PC-3 (cell line): ENCODE measurements at regions of chr12 and their contacts with region 1.

Region 1: DNA sequence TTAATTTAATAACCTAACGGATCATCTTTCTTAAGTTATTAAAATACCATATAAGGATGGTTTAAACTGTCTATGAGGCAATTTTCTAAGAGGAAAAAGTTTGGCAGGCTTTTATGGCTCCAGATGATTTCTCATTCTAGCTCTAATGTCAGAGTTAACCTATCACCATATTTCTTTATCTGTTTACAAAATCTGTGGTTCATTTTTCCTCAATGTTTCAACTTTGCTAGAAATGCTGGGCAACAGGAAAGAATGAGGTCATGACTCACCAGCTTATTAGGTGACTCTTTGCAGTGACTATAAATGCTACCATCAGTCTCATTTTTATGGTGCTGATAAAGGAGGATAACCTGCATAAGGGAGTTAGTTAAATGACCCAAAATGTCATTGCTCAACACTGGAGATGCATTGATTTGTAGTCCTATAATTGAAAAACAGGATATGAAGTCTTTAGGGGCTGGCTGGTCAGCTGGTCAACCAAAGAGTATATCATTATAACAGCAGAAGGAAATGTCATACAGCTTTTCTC is 45.3 kb upstream of the RAP1B start:
- DNase-seq: peak; percentile 96
- ATAC-seq: peak; percentile 95
- H3K4me3 ChIP-seq: no peak overlapping the region
- H3K27ac ChIP-seq: peak overlapping the region; percentile 66
- H3K4me1 ChIP-seq: peaks cover 27% of the 10 kb centered on the region
- H3K27me3 ChIP-seq: no peaks in the 10 kb centered on the region
- CTCF ChIP-seq: no peak

Region 2: GRCh38 chr12:67430708-67431335 is 1134.6 kb before region 1 on chr12:
- CTCF ChIA-PET with region 1: no interaction called
- POLR2A ChIA-PET with region 1: no interaction called
- intact Hi-C with region 1: no loop called
- DNase-seq: peak; percentile 19
- ATAC-seq: no peak
- H3K4me3 ChIP-seq: no peak overlapping the region
- H3K27ac ChIP-seq: no peak overlapping the region
- H3K4me1 ChIP-seq: peaks cover 37% of the 10 kb centered on the region
- H3K27me3 ChIP-seq: no peaks in the 10 kb centered on the region
- CTCF ChIP-seq: peak; percentile 35

Region 3: DNA sequence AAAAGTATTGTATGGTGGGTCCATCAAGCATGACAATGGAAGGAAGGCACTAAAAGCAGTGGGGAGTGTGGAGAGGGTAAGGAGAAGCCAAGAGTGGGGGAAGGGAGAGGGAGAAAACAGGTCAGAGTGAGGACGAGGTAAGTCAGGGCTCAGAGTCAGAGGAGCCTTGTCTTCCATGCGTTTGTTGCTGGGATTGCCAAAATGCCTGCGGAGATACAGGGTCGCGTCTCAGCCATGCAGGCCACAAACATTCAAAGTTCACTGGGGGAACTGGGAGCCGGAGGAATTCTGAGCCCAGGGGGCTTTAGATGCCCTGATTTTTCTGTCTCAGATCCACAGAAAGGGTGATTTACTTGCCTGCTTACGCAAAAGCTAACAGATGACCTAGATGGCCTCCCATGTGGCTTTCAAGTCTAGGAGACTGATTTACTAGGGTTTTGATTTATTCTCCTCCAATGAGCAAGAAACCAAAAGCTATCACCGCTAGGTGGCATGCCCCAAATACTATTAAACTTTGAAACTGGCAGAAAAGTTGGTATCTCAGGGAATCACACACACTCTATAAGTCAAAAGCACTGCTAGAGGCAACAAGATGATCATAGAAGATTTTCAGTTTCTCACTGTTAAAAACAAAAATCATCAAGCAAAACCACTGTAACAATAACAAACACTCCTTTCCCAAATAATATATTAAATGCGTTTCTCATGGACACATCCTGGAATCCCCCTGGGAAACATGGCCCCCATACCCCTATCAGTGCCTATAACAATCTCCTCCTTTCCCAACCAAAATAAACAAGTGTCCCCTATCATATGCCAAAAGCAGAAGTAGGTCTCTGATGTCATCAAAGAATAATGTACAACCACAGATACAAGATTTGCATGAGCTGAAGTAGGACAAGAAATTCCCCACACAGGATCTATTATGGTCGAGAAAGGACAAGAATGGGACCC is 206.6 kb before region 1 on chr12:
- CTCF ChIA-PET with region 1: no interaction called
- POLR2A ChIA-PET with region 1: no interaction called
- intact Hi-C with region 1: loop called (anchors 5 kb)
- DNase-seq: peak; percentile 84
- ATAC-seq: peak; percentile 86
- H3K4me3 ChIP-seq: no peak overlapping the region
- H3K27ac ChIP-seq: no peak overlapping the region
- H3K4me1 ChIP-seq: peaks cover 4% of the 10 kb centered on the region; the same call in 1 of the 2 replicates
- H3K27me3 ChIP-seq: no peaks in the 10 kb centered on the region
- CTCF ChIP-seq: peak; percentile 86

Region 4: DNA sequence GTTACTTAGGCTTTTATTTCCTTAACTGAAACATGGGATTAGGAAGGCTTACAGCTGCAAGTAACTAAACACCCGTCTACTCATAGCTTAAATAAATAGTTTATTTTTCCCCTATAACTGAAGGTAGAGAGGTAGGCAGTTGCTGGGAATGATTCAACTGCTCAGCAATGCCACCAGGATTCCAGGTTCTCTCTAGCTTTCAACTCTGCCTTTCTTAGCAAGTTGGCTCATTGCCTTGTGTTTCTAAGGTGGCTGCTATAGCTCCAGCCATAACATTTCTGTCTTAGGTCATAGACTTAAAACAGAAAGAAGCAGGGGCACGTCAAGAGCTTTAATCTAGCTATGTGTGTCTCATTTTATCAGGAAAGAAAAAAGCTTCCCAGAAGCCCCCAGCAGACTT is 129.6 kb before region 1 on chr12:
- CTCF ChIA-PET with region 1: no interaction called
- POLR2A ChIA-PET with region 1: no interaction called
- intact Hi-C with region 1: loop called (anchors 5 kb)
- DNase-seq: peak; percentile 97
- ATAC-seq: peak; percentile 85
- H3K4me3 ChIP-seq: peak overlapping the region; percentile 16; the same call in 1 of the 2 replicates
- H3K27ac ChIP-seq: peak overlapping the region; percentile 84
- H3K4me1 ChIP-seq: peaks cover 46% of the 10 kb centered on the region
- H3K27me3 ChIP-seq: no peaks in the 10 kb centered on the region
- CTCF ChIP-seq: no peak

Region 5: DNA sequence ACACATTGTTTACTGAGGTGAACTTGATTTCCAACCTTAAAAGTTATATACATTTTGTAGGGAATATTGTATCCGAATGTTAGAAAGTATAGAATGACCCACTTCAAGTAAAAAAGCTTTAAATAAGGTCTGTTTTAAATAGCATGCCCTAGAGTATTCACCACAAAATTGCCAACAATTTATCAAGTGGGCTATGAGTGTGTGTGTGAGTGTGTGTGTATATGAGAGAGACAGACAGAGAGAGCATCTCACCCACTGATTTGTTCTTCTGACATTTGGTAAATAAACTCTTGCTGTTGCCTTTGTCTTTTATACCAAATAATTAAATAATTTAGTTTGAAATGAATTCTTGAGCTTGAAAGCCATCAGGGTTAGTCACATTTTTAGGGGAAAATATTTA is 15.5 kb after region 1 on chr12:
- CTCF ChIA-PET with region 1: no interaction called
- POLR2A ChIA-PET with region 1: interaction called, 9 read pairs
- intact Hi-C with region 1: loop called (anchors 1 kb)
- DNase-seq: no peak
- ATAC-seq: no peak
- H3K4me3 ChIP-seq: no peak overlapping the region
- H3K27ac ChIP-seq: no peak overlapping the region
- H3K4me1 ChIP-seq: peaks cover 28% of the 10 kb centered on the region
- H3K27me3 ChIP-seq: no peaks in the 10 kb centered on the region
- CTCF ChIP-seq: no peak

Region 6: DNA sequence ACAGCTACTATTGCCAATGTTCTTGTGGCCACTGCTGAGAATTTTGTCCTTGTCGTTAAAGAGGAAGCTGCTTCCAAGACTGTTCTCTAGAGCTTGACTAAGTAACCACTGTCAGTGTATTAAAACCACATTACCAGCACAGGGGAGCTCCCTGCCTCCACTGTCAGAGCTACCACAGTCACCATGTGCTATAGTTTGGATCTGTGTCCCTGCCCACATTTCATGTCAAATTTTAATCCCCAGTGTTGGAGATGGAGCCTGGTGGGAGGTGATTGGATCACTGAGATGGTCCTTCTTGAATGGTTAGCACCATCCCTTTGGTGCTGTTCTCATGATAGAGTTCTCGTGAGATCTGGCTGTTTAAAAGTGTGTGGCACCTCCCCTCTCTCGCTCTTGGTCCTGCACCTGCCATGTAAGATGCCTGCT is 22.0 kb after region 1 on chr12:
- CTCF ChIA-PET with region 1: no interaction called
- POLR2A ChIA-PET with region 1: interaction called, 9 read pairs
- intact Hi-C with region 1: loop called (anchors 2 kb)
- DNase-seq: no peak
- ATAC-seq: no peak
- H3K4me3 ChIP-seq: no peak overlapping the region
- H3K27ac ChIP-seq: no peak overlapping the region
- H3K4me1 ChIP-seq: peaks cover 18% of the 10 kb centered on the region
- H3K27me3 ChIP-seq: no peaks in the 10 kb centered on the region
- CTCF ChIP-seq: no peak

Region 7: GRCh38 chr12:69052613-69053408 is 487.4 kb after region 1 on chr12:
- CTCF ChIA-PET with region 1: no interaction called
- POLR2A ChIA-PET with region 1: no interaction called
- intact Hi-C with region 1: loop called (anchors 10 kb)
- DNase-seq: peak; percentile 91
- ATAC-seq: peak; percentile 87
- H3K4me3 ChIP-seq: peak overlapping the region; percentile 39
- H3K27ac ChIP-seq: peak overlapping the region; percentile 84
- H3K4me1 ChIP-seq: peaks cover 23% of the 10 kb centered on the region
- H3K27me3 ChIP-seq: no peaks in the 10 kb centered on the region
- CTCF ChIP-seq: 0 out of 2 replicates have a peak, but pooled peaks have one; percentile 21